Esophagus muscularis mucosa (tissue), 4 donors: ENCODE measurements at regions of chr12 and their contacts with region 1.

Region 1: DNA sequence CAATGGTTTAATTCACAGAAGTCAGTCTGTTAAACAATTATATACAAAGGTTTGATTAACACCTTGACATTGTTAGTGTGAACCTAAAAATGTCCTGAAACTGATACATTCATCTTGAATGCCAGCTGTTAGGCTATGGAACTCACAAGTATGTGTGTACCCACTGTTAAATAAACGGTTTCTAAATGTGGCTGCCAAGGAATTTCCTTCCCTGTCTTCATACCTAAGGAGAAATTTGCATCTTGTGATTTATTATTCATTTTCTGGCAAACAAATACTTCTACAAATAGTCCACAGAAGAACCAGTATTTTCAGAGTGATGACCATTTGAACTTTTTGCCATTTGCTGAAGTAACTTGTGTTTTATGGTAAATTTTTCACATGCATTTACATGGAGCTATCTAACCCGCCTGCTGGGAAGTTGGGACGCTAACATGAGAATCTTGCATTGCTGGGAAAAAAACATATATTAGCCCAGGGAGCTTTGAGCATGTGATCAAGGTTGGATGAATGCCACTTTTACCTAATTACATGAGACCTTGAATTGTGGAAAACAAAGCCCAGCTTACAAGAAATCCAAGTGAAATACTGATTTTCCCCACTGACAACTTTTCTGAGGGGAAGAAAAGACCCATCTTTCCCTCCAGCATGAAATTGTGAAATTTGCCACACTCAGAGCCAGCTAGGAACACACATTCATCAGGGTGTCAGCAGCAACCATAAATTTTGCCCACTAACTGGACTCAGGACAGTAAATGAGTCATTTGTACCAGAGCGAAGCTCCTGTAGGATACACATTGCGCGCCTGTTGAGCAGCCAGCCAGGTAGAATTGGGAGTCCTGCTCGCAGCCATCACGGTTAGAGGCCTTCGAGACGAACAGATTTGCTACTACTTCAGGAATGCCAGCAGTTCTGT is 118.0 kb downstream of the KICS2 start:
- DNase-seq: no peak
- H3K4me3 ChIP-seq: peak overlapping the region in 1 of 4 donors; percentile 1
- H3K27ac ChIP-seq: peak overlapping the region; percentile 68 to 79 (median 75)
- H3K4me1 ChIP-seq: peaks cover 0 to 47% (median 34%) of the 10 kb centered on the region in 4 donors
- H3K27me3 ChIP-seq: no peaks in the 10 kb centered on the region
- CTCF ChIP-seq: no peak
- EP300 ChIP-seq: no peak
- POLR2A ChIP-seq: no peak

Region 2: DNA sequence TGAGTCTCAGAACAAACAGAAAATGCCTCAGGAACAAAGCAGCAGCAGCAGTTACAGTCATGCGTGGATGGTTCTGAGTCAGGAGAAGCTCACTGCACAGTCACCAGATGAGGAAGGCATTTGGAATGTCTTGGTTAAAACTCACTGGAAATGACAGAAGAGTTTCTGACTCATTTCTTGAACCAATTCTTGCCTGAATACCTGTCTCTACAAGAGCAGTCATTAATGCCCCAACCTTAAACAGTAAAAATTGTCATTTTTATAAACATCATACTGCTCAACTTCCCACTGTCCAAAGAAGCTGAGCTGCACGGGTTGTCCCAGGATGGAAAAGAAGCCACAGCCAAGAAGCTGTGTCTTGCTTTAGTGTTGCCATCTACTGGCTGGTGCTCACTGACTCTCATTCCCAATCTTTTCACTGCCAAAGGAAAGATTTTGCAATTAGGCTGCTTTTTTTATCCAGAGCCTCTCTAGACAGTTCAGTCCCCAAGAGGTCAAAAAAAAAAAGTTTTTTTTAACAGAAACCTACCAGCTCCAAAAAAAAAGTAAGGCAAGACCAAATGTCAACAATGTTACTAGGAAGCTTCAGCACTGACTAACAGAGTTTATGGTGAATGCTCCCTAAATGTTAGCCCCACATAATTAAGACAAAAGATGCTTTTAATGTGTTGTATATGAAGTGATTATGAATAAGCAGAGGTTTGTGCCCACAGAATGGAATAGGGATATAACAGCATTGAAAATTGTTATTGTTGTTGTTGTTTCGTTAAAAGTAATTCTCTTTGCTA is 77.6 kb after region 1 on chr12:
- intact Hi-C with region 1: loop called (anchors 5 kb)
- DNase-seq: no peak
- H3K4me3 ChIP-seq: peak overlapping the region in 1 of 4 donors; percentile 10
- H3K27ac ChIP-seq: peak overlapping the region; percentile 47 to 72 (median 62)
- H3K4me1 ChIP-seq: peaks cover 13 to 22% (median 18%) of the 10 kb centered on the region in 4 donors
- H3K27me3 ChIP-seq: no peaks in the 10 kb centered on the region
- CTCF ChIP-seq: peak; percentile 73 to 81 (median 76)
- EP300 ChIP-seq: no peak
- POLR2A ChIP-seq: no peak